Activated T-helper 1 cell treated with anti-CD3 and anti-CD28 coated beads, Interleukin-12 subunit alpha, Interleukin-12 subunit beta, Interleukin-2, Interleukin-4 antibody, amounts not matched to agents 30 ng/mL and 10 ng/mL and 1 ng/mL, durations not matched to agents 14 hours and 24 hours and 36 hours (primary cell): ENCODE measurements at regions of chr15 and their contacts with region 1.

Region 1: GRCh38 chr15:42495361-42496212 is at the start of gene SNAP23:
- DNase-seq: peak; percentile 84
- H3K4me3 Mint-ChIP-seq: peak within 1 kb of the TSS; percentile 100
- H3K27ac Mint-ChIP-seq: peak within 1 kb of the TSS; percentile 89
- H3K4me1 Mint-ChIP-seq: peaks cover 60% of the 10 kb centered on the region
- H3K27me3 Mint-ChIP-seq: no peaks in the 10 kb centered on the region
- total RNA-seq, gene SNAP23: 73.8 and 87.5 TPM in 2 replicates

Region 2: GRCh38 chr15:42444415-42445063 is 51.0 kb before region 1 on chr15:
- intact Hi-C with region 1: no loop called
- DNase-seq: no peak
- H3K4me3 Mint-ChIP-seq: no peak overlapping the region
- H3K27ac Mint-ChIP-seq: peak overlapping the region; percentile 48
- H3K4me1 Mint-ChIP-seq: no peaks in the 10 kb centered on the region
- H3K27me3 Mint-ChIP-seq: no peaks in the 10 kb centered on the region

Region 3: DNA sequence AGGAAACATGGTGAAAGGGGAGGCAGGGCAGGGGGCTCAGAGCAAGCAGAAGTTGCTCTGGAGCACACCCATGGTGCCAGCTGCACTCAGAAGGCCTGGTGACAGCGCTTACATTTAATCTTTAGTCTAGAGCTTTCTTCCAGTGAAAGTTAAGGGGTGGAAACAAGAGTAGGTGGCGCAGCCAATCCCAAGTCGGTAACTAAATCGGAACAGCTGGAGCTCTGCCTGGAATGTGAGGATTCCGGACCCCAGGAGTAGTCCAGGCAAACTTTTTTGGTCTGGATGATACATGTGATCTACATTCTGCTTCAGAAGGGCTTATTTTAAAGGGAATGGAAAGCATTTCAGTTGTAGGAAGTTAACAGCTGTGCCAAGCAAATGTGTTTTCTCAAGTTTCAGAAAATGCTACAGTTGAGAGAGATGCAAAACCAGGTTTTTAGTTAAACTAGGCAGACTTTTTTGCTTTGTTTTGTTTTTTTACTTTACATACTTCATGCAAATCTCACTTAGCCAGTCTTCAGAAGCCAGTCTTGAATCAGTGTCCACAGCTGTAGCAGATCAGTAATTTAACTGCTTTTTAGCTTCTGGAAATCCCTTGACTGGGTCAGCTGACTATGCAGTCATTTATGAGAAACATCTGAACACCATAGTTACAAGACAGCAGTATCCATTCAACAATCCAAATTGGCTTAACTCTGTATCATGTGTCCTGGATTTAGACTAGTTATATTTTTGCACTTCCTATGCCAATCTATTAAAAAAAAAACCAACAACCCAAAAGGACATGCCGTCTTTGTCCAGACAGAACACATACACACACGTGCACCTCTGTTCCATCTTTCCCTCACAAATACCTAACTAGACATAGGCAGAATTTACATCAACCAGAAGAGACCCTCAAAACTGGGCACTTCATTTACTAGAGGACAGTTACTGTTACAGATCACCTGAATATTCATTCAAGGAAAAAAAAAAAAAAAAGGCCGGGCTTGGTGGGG is 37.8 kb before region 1 on chr15:
- intact Hi-C with region 1: no loop called
- DNase-seq: no peak
- H3K4me3 Mint-ChIP-seq: no peak overlapping the region
- H3K27ac Mint-ChIP-seq: no peak overlapping the region
- H3K4me1 Mint-ChIP-seq: peaks cover 5% of the 10 kb centered on the region
- H3K27me3 Mint-ChIP-seq: no peaks in the 10 kb centered on the region

Region 4: GRCh38 chr15:42483677-42484076 is 11.9 kb before region 1 on chr15:
- intact Hi-C with region 1: no loop called
- DNase-seq: no peak
- H3K4me3 Mint-ChIP-seq: no peak overlapping the region
- H3K27ac Mint-ChIP-seq: peak overlapping the region; percentile 15
- H3K4me1 Mint-ChIP-seq: peaks cover 20% of the 10 kb centered on the region
- H3K27me3 Mint-ChIP-seq: no peaks in the 10 kb centered on the region

Region 5: DNA sequence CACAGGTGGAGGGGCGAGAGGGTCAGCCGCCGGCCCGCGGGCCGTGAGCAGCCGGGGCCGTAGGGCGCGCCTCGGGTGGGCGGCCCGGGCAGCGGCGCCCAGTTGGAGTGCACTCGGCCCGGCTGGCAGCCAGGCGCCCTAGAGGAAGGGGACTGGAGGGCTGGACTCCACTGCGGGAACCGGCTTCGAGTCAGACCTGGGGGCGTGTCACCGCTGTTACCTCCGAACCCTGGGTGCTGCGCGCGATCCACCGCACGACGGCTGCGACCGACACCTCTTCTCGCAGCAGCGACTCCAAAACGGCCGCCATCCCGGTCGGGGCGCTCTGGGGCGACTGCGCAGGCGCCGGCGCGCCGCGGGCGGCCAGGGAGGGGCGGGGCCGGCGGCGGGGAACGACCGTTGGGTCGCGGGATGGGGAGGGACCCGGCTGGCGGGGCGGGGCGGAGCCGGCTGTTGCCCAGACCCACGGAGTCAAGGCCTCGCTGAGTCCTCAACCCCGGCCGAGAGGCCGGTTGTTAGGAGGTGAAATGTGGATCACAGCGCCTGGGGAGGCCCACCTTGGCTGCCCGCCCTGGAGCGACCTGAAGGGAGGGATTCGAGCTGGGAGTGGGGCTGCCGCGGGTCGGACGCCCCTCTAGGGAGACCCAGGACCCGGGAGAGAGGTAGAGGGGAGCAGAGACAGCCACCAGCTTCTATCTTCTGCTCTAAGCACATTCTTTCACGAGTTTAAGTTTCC is 241.4 kb after region 1 on chr15 and contains the start of gene CDAN1:
- intact Hi-C with region 1: loop called (anchors 10 kb)
- DNase-seq: peak; percentile 89
- H3K4me3 Mint-ChIP-seq: peak within 1 kb of the TSS; percentile 78
- H3K27ac Mint-ChIP-seq: peak within 1 kb of the TSS; percentile 65
- H3K4me1 Mint-ChIP-seq: peaks cover 7% of the 10 kb centered on the region
- H3K27me3 Mint-ChIP-seq: no peaks in the 10 kb centered on the region
- total RNA-seq, gene CDAN1: 24.0 and 26.7 TPM in 2 replicates